ENCODE measurements at regions of chr1 and their contacts with region 1.

Region 1: DNA sequence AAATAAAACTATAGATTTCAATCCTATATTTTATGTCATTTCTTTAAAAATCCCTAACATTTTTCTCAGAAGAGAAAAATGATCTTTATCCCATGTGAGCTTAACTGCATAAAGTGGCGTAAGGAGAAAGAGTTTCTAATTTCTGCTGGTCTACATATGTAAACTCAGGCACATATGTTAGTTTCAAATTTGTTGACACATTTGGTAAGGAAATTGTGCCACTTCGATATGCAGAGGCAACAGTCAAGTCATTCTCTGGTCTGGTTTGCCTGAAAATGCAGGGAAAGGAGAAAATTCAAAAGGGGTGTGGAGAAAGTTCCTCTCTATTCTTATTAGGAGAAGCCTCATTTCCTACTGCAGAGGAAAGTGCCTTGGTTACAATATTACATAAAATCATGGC is 11.5 kb downstream of the KCNA3 start:
- DNase-seq: no peak
- ATAC-seq: no peak
- H3K4me3 ChIP-seq: no peak overlapping the region
- H3K4me3 Mint-ChIP-seq: no peak overlapping the region
- H3K27ac ChIP-seq: no peak overlapping the region
- H3K27ac Mint-ChIP-seq: peak overlapping the region; percentile 33
- H3K4me1 ChIP-seq: peaks cover 19% of the 10 kb centered on the region
- H3K4me1 Mint-ChIP-seq: peaks cover 39% of the 10 kb centered on the region
- H3K27me3 ChIP-seq: no peaks in the 10 kb centered on the region
- H3K27me3 Mint-ChIP-seq: no peaks in the 10 kb centered on the region
- CTCF ChIP-seq: no peak

Region 2: DNA sequence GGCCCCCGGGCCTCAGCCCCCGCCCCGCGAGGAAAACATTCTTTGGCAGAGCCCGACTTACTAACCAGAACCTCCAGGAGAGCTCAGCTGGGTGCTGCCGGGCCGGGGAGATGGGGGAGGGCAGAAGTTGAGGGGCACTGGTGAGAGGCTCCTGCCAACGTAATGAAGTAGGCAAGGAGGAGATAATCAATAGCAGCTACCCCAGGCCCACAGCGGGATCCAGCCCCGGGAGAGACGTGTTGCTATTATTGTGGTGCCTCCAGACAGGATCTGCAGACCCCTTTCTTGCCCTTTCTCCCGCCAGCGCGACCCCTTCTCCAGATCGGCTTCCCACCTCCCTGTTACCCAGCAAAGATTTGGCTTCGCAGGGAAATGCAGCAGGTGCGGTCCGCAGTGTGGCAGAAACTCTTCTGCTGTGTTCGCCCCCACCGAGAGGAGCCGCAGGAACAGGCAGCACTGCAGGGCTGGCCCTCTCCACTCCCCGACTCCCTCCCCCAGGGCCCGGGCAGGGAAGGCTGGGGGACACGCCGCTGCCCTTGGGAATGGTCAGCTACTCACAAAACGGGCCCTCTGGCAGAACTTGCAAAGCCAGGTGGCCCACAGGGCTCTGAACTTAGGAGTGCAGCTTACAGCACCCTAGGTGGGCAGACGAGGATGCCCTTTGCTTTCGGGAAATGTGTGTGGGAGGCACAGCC is 55.6 kb before region 1 on chr1:
- CTCF ChIA-PET with region 1: no interaction called
- POLR2A ChIA-PET with region 1: no interaction called
- intact Hi-C with region 1: no loop called
- DNase-seq: peak in 2 of 9 experiments; percentile 21 to 53
- ATAC-seq: peak; percentile 24
- H3K4me3 ChIP-seq: peak overlapping the region; percentile 2 to 24
- H3K4me3 Mint-ChIP-seq: peak overlapping the region; percentile 73
- H3K27ac ChIP-seq: no peak overlapping the region
- H3K27ac Mint-ChIP-seq: no peak overlapping the region
- H3K4me1 ChIP-seq: peaks cover 14% of the 10 kb centered on the region
- H3K4me1 Mint-ChIP-seq: peaks cover 22% of the 10 kb centered on the region
- H3K27me3 ChIP-seq: peaks cover 20 to 25% of the 10 kb centered on the region in 2 experiments
- H3K27me3 Mint-ChIP-seq: peaks cover 52% of the 10 kb centered on the region
- CTCF ChIP-seq: no peak

Region 3: GRCh38 chr1:110645821-110646735 is 17.2 kb before region 1 on chr1:
- CTCF ChIA-PET with region 1: interaction called, 8 read pairs
- POLR2A ChIA-PET with region 1: interaction called, 8 read pairs
- intact Hi-C with region 1: loop called in 1 of 2 experiments (anchors 2 kb)
- DNase-seq: peak in 2 of 9 experiments; percentile 27 to 53
- ATAC-seq: peak; percentile 28
- H3K4me3 ChIP-seq: no peak overlapping the region
- H3K4me3 Mint-ChIP-seq: no peak overlapping the region
- H3K27ac ChIP-seq: peak overlapping the region in 1 of 2 experiments; percentile 70
- H3K27ac Mint-ChIP-seq: peak overlapping the region; percentile 28
- H3K4me1 ChIP-seq: peaks cover 77% of the 10 kb centered on the region
- H3K4me1 Mint-ChIP-seq: peaks cover 43% of the 10 kb centered on the region
- H3K27me3 ChIP-seq: no peaks in the 10 kb centered on the region
- H3K27me3 Mint-ChIP-seq: no peaks in the 10 kb centered on the region
- CTCF ChIP-seq: no peak